PC-3 (cell line): ENCODE measurements at regions of chr12 and their contacts with region 1.

Region 1: GRCh38 chr12:120317224-120318105 is 10.1 kb downstream of the PLA2G1B start:
- DNase-seq: peak; percentile 100
- ATAC-seq: peak; percentile 98
- H3K4me3 ChIP-seq: peak overlapping the region; percentile 73
- H3K27ac ChIP-seq: peak overlapping the region; percentile 39
- H3K4me1 ChIP-seq: peaks cover 11% of the 10 kb centered on the region
- H3K27me3 ChIP-seq: no peaks in the 10 kb centered on the region
- CTCF ChIP-seq: peak; percentile 84

Region 2: DNA sequence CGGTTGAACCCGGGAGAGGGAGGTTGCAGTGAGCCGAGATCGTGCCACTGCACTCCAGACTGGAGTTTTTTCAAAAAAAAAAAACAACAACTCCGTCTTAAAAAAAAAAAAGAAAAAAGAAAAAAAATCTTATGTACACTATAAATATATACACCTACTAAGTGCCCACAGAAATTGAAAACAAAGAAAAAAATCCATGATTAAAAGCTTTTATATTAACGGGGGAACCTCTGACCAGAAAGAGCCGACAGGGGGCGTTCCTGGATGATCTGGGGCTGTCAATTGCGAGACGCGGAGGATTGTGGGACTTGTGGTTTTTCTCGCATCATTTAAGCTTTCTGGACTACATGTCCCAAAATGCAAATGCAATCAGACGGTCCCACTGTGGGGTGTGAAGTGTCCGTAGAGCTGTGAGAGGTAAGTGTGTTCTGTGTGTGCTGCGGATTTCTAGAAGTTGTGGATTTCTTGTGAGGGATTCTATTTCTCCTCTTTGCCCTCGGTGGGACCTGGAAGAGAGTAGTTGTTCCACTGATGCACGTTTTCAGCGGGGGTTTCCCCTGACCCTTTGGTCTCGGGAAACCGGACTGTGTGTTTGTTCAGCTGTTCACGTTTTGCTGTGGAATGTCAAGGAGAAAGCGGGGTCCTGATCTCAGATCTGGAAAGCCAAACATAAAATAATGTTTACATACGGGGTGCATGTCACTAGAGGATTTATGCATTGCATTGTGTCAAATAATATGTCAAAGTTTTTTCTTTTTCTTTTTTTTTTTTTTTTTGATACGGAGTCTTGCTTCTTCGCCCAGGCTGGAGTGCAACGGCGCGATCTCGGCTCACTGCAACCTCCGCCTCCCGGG is 15.3 kb before region 1 on chr12 and contains the start of gene SIRT4:
- CTCF ChIA-PET with region 1: interaction called, 4 read pairs
- POLR2A ChIA-PET with region 1: no interaction called
- intact Hi-C with region 1: loop called (anchors 1 kb)
- DNase-seq: peak; percentile 97
- ATAC-seq: peak; percentile 99
- H3K4me3 ChIP-seq: peak within 1 kb of the TSS; percentile 80
- H3K27ac ChIP-seq: no peak within 1 kb of the TSS
- H3K4me1 ChIP-seq: no peaks in the 10 kb centered on the region
- H3K27me3 ChIP-seq: no peaks in the 10 kb centered on the region
- CTCF ChIP-seq: peak; percentile 94
- total RNA-seq, gene SIRT4: 0.98 and 1.9 TPM in 2 replicates